IMR-90 (cell line): ENCODE measurements at regions of chr11 and their contacts with region 1.

Region 1: DNA sequence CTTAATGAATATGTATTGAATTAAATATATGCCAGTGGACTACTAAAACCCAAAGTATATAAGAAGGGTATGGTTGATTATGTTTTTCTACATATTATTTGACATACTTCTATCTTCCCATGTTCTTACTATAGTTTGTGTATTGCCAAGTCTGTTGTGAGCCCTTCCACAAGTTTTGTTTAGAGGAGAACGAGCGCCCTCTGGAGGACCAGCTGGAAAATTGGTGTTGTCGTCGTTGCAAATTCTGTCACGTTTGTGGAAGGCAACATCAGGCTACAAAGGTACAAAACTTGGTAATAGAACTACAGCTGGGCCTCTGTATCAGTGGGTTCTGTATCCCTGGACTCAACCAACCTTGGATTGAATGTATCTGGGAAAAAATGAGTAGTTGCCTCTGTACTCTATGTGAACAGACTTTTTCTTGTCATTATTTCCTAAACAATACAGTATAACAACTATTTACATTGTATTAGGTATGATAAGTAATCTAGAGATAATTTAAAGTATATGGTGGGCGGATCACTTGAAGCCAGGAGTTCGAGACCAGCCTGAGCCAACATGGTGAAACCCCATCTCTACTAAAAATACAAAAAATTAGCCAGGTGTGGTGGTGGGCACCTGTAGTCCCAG is 38.7 kb upstream of the TTC36 start:
- DNase-seq: peak; percentile 83
- ATAC-seq: peak; percentile 88
- H3K4me3 ChIP-seq: no peak overlapping the region
- H3K27ac ChIP-seq: no peak overlapping the region
- H3K4me1 ChIP-seq: no peaks in the 10 kb centered on the region
- H3K27me3 ChIP-seq: no peaks in the 10 kb centered on the region
- CTCF ChIP-seq: peak; percentile 83
- POLR2A ChIP-seq: no peak
- RAD21 ChIP-seq: peak; percentile 82

Region 2: DNA sequence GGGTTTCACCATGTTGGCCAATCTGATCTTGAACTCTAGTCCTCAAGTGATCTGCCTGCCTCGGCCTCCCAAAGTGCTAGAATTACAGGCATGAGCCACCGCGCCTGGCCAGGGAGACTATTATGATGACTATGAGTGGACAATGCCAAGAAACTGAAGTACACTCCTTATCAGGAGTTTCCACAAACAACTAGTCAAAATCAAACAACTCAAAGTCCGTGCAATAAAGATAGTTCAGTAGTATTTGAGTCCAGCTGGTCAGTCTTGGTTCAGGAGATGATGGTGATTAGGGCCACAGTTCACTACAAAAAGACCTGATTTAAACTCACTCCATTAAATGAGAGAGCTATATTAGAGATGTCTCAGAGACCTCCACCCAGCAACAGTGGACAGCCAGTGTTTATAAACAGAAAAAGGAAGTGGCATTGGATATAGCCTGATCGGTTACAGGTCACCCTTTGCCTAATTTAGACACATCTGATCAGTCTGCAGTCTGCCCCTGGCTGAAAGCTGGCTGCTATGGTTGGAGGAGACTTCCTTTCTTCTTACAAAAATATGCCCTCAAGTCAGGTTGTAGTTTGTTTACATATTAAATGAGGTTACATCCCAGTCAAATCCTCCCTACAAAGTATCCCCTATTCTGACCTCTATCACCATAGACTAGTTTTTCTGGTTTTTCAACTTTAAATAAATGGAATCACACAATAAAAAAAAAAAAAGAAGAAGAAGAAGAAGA is 167.0 kb before region 1 on chr11:
- CTCF ChIA-PET with region 1: no interaction called
- POLR2A ChIA-PET with region 1: no interaction called
- dilution Hi-C with region 1: no loop called
- in situ Hi-C with region 1: no loop called
- intact Hi-C with region 1: no loop called
- DNase-seq: no peak
- ATAC-seq: no peak
- H3K4me3 ChIP-seq: no peak overlapping the region
- H3K27ac ChIP-seq: no peak overlapping the region
- H3K4me1 ChIP-seq: no peaks in the 10 kb centered on the region
- H3K27me3 ChIP-seq: peaks cover 2% of the 10 kb centered on the region
- CTCF ChIP-seq: no peak
- POLR2A ChIP-seq: no peak
- RAD21 ChIP-seq: no peak

Region 3: DNA sequence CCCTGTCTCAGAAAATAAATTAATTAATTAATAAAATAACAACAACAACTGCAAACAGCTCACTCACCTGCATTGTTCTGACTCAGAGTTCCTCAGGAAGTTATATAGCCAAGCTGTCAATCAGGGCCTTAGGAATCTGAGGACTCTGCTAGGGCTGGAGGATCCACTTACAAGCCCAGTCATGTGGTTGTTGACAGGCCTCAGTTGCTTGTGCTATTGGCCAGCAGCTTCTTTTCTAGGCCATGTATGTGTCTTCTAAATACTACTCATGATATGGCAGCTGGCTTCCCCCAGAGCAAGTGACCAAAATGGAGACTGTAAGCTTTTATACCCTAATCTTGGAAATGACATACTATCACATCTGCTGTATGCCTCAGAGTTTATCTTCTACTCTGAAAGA is 108.0 kb before region 1 on chr11:
- CTCF ChIA-PET with region 1: no interaction called
- POLR2A ChIA-PET with region 1: no interaction called
- dilution Hi-C with region 1: no loop called
- in situ Hi-C with region 1: no loop called
- intact Hi-C with region 1: loop called (anchors 5 kb)
- DNase-seq: peak; percentile 1
- ATAC-seq: peak; percentile 42
- H3K4me3 ChIP-seq: no peak overlapping the region
- H3K27ac ChIP-seq: no peak overlapping the region
- H3K4me1 ChIP-seq: no peaks in the 10 kb centered on the region
- H3K27me3 ChIP-seq: no peaks in the 10 kb centered on the region
- CTCF ChIP-seq: no peak
- POLR2A ChIP-seq: no peak
- RAD21 ChIP-seq: no peak

Region 4: DNA sequence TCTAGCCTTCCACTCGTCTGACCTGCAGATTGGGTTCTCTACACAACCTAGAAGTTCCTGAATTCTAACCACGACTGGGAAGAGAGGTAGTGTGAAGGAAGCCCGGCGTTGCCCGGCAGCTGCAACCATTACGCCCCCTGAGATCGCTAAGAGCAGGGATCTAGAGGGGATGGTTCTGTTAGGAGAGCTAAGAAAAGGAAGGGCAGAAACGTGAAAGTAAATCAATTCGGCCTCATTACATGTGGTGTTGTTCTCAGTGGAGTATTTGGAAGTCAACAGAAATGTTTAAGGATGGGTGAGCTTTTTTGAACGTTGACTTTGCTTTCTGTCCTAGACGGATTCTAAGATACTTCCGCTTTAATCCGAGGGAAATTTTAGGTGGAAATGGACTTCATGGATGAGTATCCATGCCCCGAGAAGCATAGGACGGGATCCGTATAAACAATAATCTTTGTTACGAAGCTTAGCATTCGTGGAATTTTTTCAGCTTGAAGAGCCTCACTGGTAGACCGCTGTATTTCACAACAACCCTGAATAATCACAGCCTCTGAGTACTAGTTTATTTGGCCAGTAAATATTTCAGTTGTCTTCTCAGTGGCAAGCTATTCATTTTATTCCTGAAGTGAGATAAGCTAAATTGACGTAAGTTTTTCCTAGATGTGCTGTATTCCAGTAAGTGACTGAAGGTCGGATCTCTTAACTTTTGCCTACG is 86.6 kb before region 1 on chr11:
- CTCF ChIA-PET with region 1: interaction called, 7 read pairs
- POLR2A ChIA-PET with region 1: no interaction called
- dilution Hi-C with region 1: no loop called
- in situ Hi-C with region 1: no loop called
- intact Hi-C with region 1: loop called (anchors 1 kb)
- DNase-seq: peak; percentile 92
- ATAC-seq: peak; percentile 55
- H3K4me3 ChIP-seq: peak overlapping the region; percentile 86
- H3K27ac ChIP-seq: peak overlapping the region; percentile 91
- H3K4me1 ChIP-seq: peaks cover 5% of the 10 kb centered on the region
- H3K27me3 ChIP-seq: no peaks in the 10 kb centered on the region
- CTCF ChIP-seq: no peak
- POLR2A ChIP-seq: peak; percentile 27; the same call in 1 of the 2 replicates
- RAD21 ChIP-seq: no peak

Region 5: GRCh38 chr11:118435893-118436624 is 52.5 kb before region 1 on chr11 and contains the start of gene KMT2A:
- CTCF ChIA-PET with region 1: no interaction called
- POLR2A ChIA-PET with region 1: no interaction called
- dilution Hi-C with region 1: no loop called
- in situ Hi-C with region 1: no loop called
- intact Hi-C with region 1: loop called (anchors 5 kb)
- DNase-seq: peak; percentile 95
- ATAC-seq: peak; percentile 86
- H3K4me3 ChIP-seq: peak within 1 kb of the TSS; percentile 99
- H3K27ac ChIP-seq: peak within 1 kb of the TSS; percentile 95
- H3K4me1 ChIP-seq: peaks cover 6% of the 10 kb centered on the region
- H3K27me3 ChIP-seq: no peaks in the 10 kb centered on the region
- CTCF ChIP-seq: no peak
- POLR2A ChIP-seq: no peak; the same call in 1 of the 2 replicates
- RAD21 ChIP-seq: no peak
- total RNA-seq, gene KMT2A: 19.7 and 21.1 TPM in 2 replicates

Region 6: GRCh38 chr11:118552341-118552740 is 63.7 kb after region 1 on chr11:
- CTCF ChIA-PET with region 1: no interaction called
- POLR2A ChIA-PET with region 1: no interaction called
- dilution Hi-C with region 1: no loop called
- in situ Hi-C with region 1: no loop called
- intact Hi-C with region 1: no loop called
- DNase-seq: no peak
- ATAC-seq: no peak
- H3K4me3 ChIP-seq: no peak overlapping the region
- H3K27ac ChIP-seq: no peak overlapping the region
- H3K4me1 ChIP-seq: no peaks in the 10 kb centered on the region
- H3K27me3 ChIP-seq: no peaks in the 10 kb centered on the region
- CTCF ChIP-seq: no peak
- POLR2A ChIP-seq: no peak
- RAD21 ChIP-seq: no peak